Ascending aorta (tissue), 2 donors: ENCODE measurements at regions of chr6 and their contacts with region 1.

Region 1: DNA sequence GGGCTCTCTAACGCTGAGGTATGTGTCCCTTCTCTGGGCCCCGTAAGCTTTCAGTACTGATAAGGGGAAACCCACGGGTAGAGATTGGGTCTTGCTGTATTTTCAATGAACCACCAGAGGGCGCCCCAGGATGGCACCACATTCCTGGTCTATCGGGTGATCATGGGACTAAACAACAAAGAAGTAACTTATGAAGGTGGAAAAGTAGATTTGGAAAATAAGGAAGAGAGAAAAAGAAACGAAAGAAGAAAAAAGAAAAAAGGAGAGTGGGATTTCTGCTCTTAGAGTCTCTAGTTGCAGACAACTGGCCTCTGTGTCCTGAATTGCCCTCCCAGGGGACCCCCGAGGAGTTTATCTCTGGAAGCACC is 93.8 kb downstream of the GMPR start:
- DNase-seq: peak in 1 of 2 donors; percentile 87
- H3K4me3 ChIP-seq: no peak overlapping the region
- H3K27ac ChIP-seq: no peak overlapping the region
- H3K4me1 ChIP-seq: peaks cover 0 to 17% of the 10 kb centered on the region in 2 donors
- H3K27me3 ChIP-seq: no peaks in the 10 kb centered on the region
- CTCF ChIP-seq: peak; percentile 87 to 92 (median 91)

Region 2: GRCh38 chr6:15810618-15811017 is 521.5 kb before region 1 on chr6:
- intact Hi-C with region 1: no loop called
- DNase-seq: no peak
- H3K4me3 ChIP-seq: no peak overlapping the region
- H3K27ac ChIP-seq: no peak overlapping the region
- H3K4me1 ChIP-seq: no peaks in the 10 kb centered on the region
- H3K27me3 ChIP-seq: no peaks in the 10 kb centered on the region
- CTCF ChIP-seq: no peak

Region 3: GRCh38 chr6:16286148-16286522 is 46.0 kb before region 1 on chr6:
- intact Hi-C with region 1: loop called (anchors 5 kb)
- DNase-seq: peak in 1 of 2 donors; percentile 63
- H3K4me3 ChIP-seq: peak overlapping the region in 1 of 2 donors; percentile 13
- H3K27ac ChIP-seq: no peak overlapping the region
- H3K4me1 ChIP-seq: peaks cover 0 to 3% of the 10 kb centered on the region in 2 donors
- H3K27me3 ChIP-seq: no peaks in the 10 kb centered on the region
- CTCF ChIP-seq: peak; percentile 40 to 76 (median 66)

Region 4: GRCh38 chr6:16301511-16301910 is 30.6 kb before region 1 on chr6:
- intact Hi-C with region 1: no loop called
- DNase-seq: peak in 1 of 2 donors; percentile 27
- H3K4me3 ChIP-seq: no peak overlapping the region
- H3K27ac ChIP-seq: no peak overlapping the region
- H3K4me1 ChIP-seq: no peaks in the 10 kb centered on the region
- H3K27me3 ChIP-seq: no peaks in the 10 kb centered on the region
- CTCF ChIP-seq: no peak

Region 5: GRCh38 chr6:16409531-16410441 is 77.6 kb after region 1 on chr6:
- intact Hi-C with region 1: loop called (anchors 1 kb)
- DNase-seq: peak in 1 of 2 donors; percentile 83
- H3K4me3 ChIP-seq: no peak overlapping the region
- H3K27ac ChIP-seq: no peak overlapping the region
- H3K4me1 ChIP-seq: peaks cover 2 to 21% of the 10 kb centered on the region in 2 donors
- H3K27me3 ChIP-seq: no peaks in the 10 kb centered on the region
- CTCF ChIP-seq: peak; percentile 64 to 82 (median 75)

Region 6: DNA sequence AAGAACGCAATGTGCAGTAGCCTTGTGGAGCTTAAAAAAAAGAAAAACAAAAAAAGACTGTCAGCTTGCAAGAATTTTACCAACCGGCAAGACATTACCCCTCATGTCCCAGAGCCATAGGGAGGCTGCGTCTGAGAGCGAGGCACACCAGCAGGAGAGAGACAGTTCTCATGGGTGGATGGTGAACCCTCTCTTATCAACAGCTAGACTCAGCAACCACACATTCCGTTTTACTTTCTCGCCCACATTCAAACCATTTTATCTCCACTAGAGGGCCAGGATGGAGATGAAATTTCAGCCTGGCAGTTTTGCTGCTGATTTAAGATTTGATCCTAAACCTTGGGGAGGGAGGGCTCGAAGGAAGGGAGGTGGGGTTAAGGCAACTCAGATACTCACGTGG is 182.1 kb after region 1 on chr6:
- intact Hi-C with region 1: loop called (anchors 5 kb)
- DNase-seq: no peak
- H3K4me3 ChIP-seq: no peak overlapping the region
- H3K27ac ChIP-seq: no peak overlapping the region
- H3K4me1 ChIP-seq: peaks cover 3 to 20% of the 10 kb centered on the region in 2 donors
- H3K27me3 ChIP-seq: no peaks in the 10 kb centered on the region
- CTCF ChIP-seq: peak; percentile 37 to 54 (median 44)

Region 7: GRCh38 chr6:17032988-17033634 is 701.0 kb after region 1 on chr6:
- intact Hi-C with region 1: loop called (anchors 10 kb)
- DNase-seq: peak; percentile 38 to 86
- H3K4me3 ChIP-seq: peak overlapping the region; percentile 18 to 42
- H3K27ac ChIP-seq: peak overlapping the region; percentile 76 to 78
- H3K4me1 ChIP-seq: peaks cover 0 to 9% of the 10 kb centered on the region in 2 donors
- H3K27me3 ChIP-seq: no peaks in the 10 kb centered on the region
- CTCF ChIP-seq: no peak